Aorta (tissue), 5 donors: ENCODE measurements at regions of chr4 and their contacts with region 1.

Region 1: GRCh38 chr4:4248029-4248884 is at the start of gene TMEM128:
- DNase-seq: peak; percentile 95 to 97
- ATAC-seq: peak; percentile 97
- H3K4me3 ChIP-seq: peak within 1 kb of the TSS; percentile 69 to 94
- H3K27ac ChIP-seq: peak within 1 kb of the TSS; percentile 76 to 96
- H3K4me1 ChIP-seq: no peaks in the 10 kb centered on the region
- H3K27me3 ChIP-seq: no peaks in the 10 kb centered on the region
- total RNA-seq, gene TMEM128: 14.8 to 15.6 TPM

Region 2: DNA sequence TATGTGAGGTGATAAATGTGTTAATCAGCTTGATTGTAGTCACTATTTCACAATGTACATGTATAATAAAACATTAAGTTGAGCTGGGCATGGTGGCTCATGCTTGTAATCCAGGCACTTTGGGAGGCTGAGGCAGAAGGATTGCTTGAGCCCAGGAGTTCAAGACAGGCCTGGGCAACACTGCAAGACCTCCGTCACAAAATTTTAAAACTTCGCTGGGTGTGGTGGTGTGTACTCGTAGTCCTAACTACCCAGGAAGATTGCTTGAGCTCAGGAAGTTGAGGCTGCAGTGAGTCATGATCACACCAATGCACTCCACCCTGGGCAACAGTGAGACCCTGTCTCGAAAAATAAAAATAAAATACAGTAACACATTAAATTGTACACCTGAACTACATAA is 21.6 kb after region 1 on chr4:
- intact Hi-C with region 1: no loop called
- DNase-seq: no peak
- ATAC-seq: no peak
- H3K4me3 ChIP-seq: no peak overlapping the region
- H3K27ac ChIP-seq: no peak overlapping the region
- H3K4me1 ChIP-seq: no peaks in the 10 kb centered on the region
- H3K27me3 ChIP-seq: no peaks in the 10 kb centered on the region

Region 3: DNA sequence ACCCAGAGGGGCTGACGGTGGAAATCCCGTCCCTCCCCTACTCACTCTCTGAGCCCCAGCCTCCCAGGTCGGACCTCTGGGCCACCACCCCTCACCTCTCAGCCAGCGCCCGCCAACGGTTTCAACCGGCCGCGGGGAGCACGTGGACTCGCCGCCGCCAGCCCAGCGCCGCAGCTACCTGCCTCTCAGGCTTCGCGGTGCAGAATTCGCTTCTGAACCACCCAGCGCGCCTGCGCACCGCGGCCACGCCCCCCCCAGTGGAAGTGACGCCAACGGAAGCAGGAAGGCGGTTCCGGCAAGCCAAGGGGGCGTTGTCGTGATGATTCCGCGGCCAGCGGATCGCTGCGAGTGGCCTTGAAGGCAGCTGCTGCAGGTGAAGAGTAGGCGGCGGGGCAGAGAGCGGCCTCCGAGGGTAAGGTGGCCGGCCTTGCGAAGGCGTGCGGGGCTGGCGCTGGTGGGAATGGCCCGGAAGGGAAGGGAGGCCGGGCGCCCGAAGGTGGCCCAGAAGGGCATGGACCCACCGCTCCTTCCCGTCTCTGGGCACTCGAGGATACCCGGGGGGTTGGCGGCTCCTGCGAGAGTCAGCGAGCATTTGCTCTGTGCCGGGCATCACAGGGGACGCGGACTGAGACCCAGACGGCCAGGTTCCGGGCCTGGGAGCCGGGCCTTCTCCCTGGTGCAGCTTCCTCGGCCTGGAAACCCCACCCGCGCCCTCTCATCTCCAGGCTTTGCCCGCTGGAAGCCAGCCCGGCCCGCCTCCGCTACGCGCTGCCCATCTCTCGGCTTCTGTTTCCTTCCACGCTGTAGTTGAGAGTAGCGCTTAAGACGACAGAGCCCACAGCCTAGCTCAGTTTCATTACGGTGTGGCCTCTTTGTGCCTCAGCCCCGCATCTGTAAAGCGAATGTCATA is 41.9 kb after region 1 on chr4 and contains the starts of genes LYAR and ZBTB49:
- intact Hi-C with region 1: loop called in 1 of 2 experiments (anchors 1 kb)
- DNase-seq: peak; percentile 96 to 98
- ATAC-seq: peak; percentile 98
- H3K4me3 ChIP-seq: peak within 1 kb of the TSS; percentile 82 to 84
- H3K27ac ChIP-seq: peak within 1 kb of the TSS in 1 of 2 donors; percentile 15
- H3K4me1 ChIP-seq: peaks cover 0 to 6% of the 10 kb centered on the region in 2 donors
- H3K27me3 ChIP-seq: no peaks in the 10 kb centered on the region
- total RNA-seq, gene LYAR: 9.6 to 12.1 TPM
- total RNA-seq, gene ZBTB49: 4.9 to 7.4 TPM

Region 4: DNA sequence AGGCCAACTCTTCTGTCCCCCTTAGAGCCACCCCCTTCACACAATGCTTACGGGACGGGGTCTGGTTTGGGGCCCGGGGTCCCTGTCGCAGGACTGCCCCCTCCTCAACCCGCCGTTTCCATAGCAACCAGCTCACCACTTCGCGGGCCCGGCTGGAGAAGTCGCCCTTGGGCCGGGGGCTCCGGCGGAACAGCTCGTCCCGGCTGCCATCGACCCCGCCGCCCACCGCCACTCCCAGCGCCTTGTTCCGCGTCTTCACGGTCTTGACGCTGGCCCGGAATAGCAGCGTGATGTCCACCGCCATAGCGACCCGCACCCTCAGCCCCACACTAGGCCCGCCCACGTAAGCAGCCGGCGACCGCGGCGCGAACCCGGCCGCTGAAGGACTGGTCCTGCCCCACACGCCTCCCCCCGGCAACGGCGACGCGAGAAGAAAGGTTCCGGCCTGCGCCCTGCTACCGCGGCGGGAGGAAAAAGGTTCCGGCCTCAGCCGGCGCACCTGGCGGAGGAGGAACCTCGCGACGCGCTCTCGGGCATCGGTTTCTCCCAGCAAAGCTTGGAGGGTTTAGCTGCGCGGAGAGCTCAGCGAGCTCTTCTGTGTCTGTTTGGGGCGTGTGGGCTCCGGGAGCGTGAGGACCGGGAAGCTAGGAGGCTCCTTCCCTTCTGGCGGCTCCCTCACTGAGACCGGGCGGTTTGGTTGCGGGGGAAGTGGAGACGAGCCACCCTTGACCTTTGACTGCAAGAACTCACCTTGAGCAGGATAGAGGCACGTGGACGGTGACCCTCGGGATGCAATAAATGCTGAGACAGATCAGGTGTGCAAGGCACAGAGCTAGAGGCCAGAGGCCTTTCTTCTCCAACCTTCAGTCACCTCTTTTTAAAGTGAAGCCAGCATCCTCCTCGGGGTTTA is 293.7 kb after region 1 on chr4 and contains the start of gene STX18:
- intact Hi-C with region 1: loop called in 1 of 2 experiments (anchors 5 kb)
- DNase-seq: peak; percentile 90 to 96
- ATAC-seq: peak; percentile 98
- H3K4me3 ChIP-seq: peak within 1 kb of the TSS; percentile 29 to 90
- H3K27ac ChIP-seq: peak within 1 kb of the TSS in 1 of 2 donors; percentile 6
- H3K4me1 ChIP-seq: no peaks in the 10 kb centered on the region
- H3K27me3 ChIP-seq: no peaks in the 10 kb centered on the region
- total RNA-seq, gene STX18: 23.6 to 36.0 TPM